ENCODE measurements at regions of chr11 and their contacts with region 1.

Region 1: GRCh38 chr11:61332797-61333549 is at the starts of genes DDB1 and TKFC:
- DNase-seq: peak; percentile 98
- H3K4me3 Mint-ChIP-seq: peak within 1 kb of the TSS; percentile 94
- H3K27ac Mint-ChIP-seq: peak within 1 kb of the TSS; percentile 94
- H3K4me1 Mint-ChIP-seq: peaks cover 58% of the 10 kb centered on the region
- H3K27me3 Mint-ChIP-seq: no peaks in the 10 kb centered on the region
- total RNA-seq, gene DDB1: 260 and 264 TPM in 2 replicates
- total RNA-seq, gene TKFC: 72.8 and 78.3 TPM in 2 replicates

Region 2: DNA sequence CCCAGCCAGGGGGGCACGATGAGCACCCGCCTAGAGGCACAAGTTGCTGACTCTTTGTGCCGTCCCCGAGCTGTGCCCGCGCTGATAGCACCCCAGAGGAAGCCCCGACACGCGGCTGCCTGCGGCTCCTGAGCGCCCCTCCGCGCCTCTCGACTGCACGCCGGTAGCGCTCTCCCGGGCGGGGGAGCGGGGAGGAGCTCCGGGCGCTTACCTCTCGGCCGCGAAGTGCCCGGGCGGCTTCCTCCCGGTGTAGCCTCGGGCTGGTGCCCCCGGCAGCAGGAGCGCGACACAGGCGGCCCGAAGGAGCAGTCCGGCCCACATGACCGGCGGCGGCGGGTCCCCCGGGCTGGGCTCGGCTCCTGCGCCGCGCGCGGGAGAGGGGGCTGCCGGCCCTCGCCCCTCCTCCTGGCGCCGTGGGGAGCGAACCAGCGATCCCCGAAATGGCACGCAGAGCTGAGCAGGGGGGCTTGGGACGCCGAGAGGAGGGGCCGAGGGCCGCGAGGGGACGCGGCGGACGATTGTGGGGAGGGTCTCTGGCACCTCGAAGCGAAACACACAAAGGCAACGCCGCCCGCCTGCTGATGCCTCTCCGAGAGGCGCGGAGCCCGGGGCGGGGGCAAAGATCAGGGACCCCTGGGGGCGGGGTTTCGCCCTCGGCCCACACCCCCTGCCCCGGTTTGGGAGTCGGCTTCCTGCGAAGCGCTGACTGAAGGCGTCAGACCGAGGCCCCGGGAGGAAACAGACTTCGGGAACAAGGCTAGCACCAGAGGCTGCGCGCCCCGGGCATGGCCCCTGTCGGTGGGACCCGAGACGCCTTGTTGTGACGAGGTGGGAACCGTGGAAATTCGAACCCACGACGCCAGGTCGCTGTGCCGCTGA is 38.0 kb before region 1 on chr11 and contains the start of gene VWCE:
- intact Hi-C with region 1: loop called (anchors 5 kb)
- DNase-seq: peak; percentile 67
- H3K4me3 Mint-ChIP-seq: peak within 1 kb of the TSS; percentile 83
- H3K27ac Mint-ChIP-seq: peak within 1 kb of the TSS; percentile 52
- H3K4me1 Mint-ChIP-seq: peaks cover 30% of the 10 kb centered on the region
- H3K27me3 Mint-ChIP-seq: peaks cover 14% of the 10 kb centered on the region
- total RNA-seq, gene VWCE: 8.1 and 10.1 TPM in 2 replicates

Region 3: DNA sequence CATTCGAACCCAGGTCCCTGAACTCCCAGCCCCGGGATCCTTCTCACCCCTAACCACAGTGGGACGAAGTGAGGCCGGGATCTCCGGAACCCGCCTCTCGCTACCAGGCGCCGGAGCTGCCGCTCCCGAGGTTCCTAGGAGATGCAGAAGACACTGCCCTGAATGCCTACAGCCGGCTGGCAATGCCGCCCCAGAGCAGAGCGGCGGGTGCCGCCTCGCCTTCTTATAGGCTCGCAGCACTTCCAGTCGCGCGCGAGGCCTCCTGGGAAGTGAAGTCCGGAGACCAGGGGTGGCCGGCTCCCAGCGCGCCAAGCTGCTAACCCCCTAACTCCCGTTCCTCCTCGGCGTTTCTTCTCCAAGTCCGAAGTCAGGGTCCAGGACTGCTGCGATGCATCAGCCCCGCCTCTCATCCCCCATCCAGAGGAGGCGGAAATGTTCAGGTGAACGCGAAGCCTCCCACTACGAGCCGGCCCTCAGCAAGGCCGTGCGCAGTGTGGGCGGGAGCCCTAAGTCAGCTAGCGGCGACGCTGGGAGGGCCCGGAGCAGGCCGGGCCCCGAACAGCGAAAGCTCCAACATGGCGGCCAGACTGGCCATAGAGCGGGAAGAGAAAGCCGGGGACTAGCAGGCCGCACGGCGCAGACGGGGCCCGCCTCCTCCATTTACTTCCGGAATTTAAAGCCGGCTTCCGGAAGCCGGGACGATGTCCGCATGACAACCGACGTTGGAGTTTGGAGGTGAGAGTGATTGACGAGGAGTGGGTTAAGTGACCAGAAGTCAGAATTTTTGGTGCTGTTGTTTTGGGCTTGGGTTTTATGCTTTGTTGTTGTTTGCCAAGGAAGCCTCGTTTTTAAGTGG is 28.9 kb after region 1 on chr11 and contains the starts of genes CYB561A3 and TMEM138:
- intact Hi-C with region 1: loop called (anchors 1 kb)
- DNase-seq: peak; percentile 91
- H3K4me3 Mint-ChIP-seq: peak within 1 kb of the TSS; percentile 100
- H3K27ac Mint-ChIP-seq: peak within 1 kb of the TSS; percentile 99
- H3K4me1 Mint-ChIP-seq: peaks cover 22% of the 10 kb centered on the region
- H3K27me3 Mint-ChIP-seq: no peaks in the 10 kb centered on the region
- total RNA-seq, gene CYB561A3: 32.9 and 34.1 TPM in 2 replicates
- total RNA-seq, gene TMEM138: 52.3 and 54.5 TPM in 2 replicates

Region 4: GRCh38 chr11:61384271-61385242 is 51.6 kb after region 1 on chr11:
- intact Hi-C with region 1: loop called (anchors 1 kb)
- DNase-seq: no peak
- H3K4me3 Mint-ChIP-seq: no peak overlapping the region
- H3K27ac Mint-ChIP-seq: no peak overlapping the region
- H3K4me1 Mint-ChIP-seq: peaks cover 6% of the 10 kb centered on the region
- H3K27me3 Mint-ChIP-seq: no peaks in the 10 kb centered on the region

Region 5: DNA sequence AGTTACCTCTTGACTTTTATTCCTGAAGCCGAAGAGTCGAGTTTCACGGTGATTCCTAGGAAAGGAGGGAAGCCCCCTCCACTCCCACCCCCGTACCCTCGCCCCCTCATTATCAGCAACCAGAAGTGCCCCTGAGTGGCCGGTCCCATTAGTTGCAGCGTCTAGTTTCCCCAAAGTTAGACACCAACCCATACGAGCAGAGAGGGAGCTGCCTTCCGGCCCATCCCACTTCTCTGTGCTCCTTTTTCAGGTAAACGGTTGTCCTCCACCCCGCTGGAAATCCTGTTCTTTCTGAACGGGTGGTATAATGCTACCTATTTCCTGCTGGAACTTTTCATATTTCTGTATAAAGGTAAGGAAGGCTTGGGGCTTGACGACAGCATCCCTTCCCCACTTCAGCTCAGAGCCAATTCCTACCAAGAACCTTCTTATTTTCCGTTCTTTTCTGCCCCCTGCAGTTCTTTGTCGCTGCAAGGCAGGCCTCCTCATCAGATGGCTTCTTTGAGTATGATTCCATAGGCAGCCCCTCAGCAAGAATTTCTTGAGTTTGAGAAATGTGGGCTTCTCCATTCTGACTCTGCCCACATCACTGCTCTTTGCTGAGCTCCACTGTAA is 60.1 kb after region 1 on chr11:
- intact Hi-C with region 1: loop called (anchors 1 kb)
- DNase-seq: no peak
- H3K4me3 Mint-ChIP-seq: peak overlapping the region; percentile 84
- H3K27ac Mint-ChIP-seq: peak overlapping the region; percentile 91
- H3K4me1 Mint-ChIP-seq: peaks cover 15% of the 10 kb centered on the region
- H3K27me3 Mint-ChIP-seq: no peaks in the 10 kb centered on the region

Region 6: GRCh38 chr11:61429691-61430582 is 97.0 kb after region 1 on chr11 and contains the starts of genes CPSF7 and SDHAF2:
- intact Hi-C with region 1: loop called (anchors 2 kb)
- DNase-seq: peak; percentile 97
- H3K4me3 Mint-ChIP-seq: peak within 1 kb of the TSS; percentile 95
- H3K27ac Mint-ChIP-seq: peak within 1 kb of the TSS; percentile 97
- H3K4me1 Mint-ChIP-seq: peaks cover 43% of the 10 kb centered on the region
- H3K27me3 Mint-ChIP-seq: no peaks in the 10 kb centered on the region
- total RNA-seq, gene CPSF7: 123 and 135 TPM in 2 replicates
- total RNA-seq, gene SDHAF2: 41.6 and 46.4 TPM in 2 replicates

Region 7: DNA sequence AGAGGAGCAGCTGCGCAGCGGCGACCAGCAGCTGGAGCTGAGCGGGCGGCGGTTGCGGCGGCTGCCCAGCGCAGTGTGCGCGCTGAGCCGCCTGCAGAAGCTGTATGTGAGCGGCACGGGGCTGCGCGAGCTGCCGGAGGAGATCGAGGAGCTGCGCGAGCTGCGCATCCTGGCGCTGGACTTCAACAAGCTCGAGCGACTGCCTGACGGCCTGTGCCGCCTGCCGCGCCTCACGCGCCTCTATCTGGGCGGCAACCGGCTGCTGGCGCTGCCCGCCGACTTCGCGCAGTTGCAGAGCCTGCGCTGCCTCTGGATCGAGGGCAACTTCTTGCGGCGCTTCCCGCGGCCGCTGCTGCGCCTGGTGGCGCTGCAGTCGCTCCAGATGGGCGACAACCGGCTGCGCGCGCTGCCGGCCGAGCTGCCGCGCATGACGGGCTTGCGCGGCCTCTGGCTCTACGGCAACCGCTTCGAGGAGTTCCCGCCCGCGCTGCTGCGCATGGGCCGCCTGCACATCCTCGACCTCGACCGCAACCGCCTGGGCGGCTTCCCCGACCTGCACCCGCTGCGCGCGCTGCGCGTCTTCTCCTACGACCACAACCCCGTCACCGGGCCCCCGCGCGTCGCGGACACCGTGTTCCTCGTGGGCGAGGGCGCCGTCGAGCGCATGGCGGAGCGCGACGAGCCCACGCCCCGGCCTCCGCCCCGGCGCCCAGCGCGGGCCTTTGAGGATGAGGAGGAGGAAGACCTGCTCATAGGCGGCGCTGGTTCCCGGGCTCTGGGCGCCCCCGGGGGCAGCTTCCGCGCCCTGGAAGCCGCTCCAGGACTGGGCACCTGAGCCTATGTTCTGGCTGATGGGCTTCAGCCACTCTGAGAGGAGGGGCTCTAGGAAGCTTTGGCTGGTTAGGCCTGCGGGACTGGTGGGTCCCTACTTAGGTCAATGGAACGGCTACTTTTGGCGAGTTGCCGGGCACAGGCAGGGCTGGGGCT is 176.4 kb after region 1 on chr11:
- intact Hi-C with region 1: loop called (anchors 10 kb)
- DNase-seq: peak; percentile 76
- H3K4me3 Mint-ChIP-seq: peak overlapping the region; percentile 18
- H3K27ac Mint-ChIP-seq: no peak overlapping the region
- H3K4me1 Mint-ChIP-seq: peaks cover 6% of the 10 kb centered on the region
- H3K27me3 Mint-ChIP-seq: peaks cover 46% of the 10 kb centered on the region